A673 (cell line): ENCODE measurements at regions of chr1 and their contacts with region 1.

Region 1: DNA sequence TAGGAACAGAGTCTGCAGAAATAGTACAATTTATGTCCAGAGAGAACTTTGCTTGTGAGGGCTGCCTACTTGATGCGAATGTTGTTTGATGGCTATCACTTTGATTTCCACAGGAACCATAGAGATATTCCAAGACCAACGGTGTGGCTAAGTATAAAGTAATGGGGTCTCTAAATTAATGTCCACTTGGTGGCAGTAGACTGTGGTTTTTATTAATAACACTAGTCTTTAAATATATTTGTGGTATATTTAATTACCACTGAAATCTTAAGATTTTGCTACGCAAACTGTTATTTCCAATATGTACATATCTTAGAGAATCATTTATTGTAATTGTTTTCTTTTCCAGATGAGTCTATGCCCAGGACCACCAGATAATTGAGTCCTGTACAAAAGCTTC is 647.9 kb downstream of the PLA2G4A start:
- DNase-seq: peak; percentile 35
- H3K4me3 ChIP-seq: no peak overlapping the region
- H3K27ac ChIP-seq: no peak overlapping the region
- H3K4me1 ChIP-seq: peaks cover 3% of the 10 kb centered on the region
- H3K27me3 ChIP-seq: no peaks in the 10 kb centered on the region
- CTCF ChIP-seq: peak; percentile 64

Region 2: GRCh38 chr1:187313133-187313532 is 163.5 kb before region 1 on chr1:
- CTCF ChIA-PET with region 1: no interaction called
- POLR2A ChIA-PET with region 1: no interaction called
- intact Hi-C with region 1: no loop called
- DNase-seq: no peak
- H3K4me3 ChIP-seq: no peak overlapping the region
- H3K27ac ChIP-seq: no peak overlapping the region
- H3K4me1 ChIP-seq: no peaks in the 10 kb centered on the region
- H3K27me3 ChIP-seq: no peaks in the 10 kb centered on the region
- CTCF ChIP-seq: no peak

Region 3: DNA sequence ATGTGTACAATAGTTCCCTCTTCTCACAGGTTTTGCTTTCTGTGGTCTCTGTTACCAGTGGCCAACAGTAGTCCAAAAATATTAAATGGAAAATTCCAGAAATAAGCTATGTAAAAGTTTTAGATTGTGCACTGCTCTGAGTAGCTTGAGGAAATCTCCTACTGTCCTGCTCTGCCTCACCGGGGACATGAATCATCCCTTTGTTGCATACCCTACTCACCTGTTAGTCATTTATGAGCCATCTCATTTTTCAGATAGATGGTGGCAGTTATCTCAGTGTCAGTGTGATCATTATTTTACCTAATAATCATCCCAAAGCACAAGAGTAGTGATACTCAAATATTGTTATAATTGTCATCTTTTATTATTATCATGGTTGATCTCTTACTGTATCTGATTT is 40.2 kb after region 1 on chr1:
- CTCF ChIA-PET with region 1: no interaction called
- POLR2A ChIA-PET with region 1: interaction called, 10 read pairs
- intact Hi-C with region 1: no loop called
- DNase-seq: no peak
- H3K4me3 ChIP-seq: no peak overlapping the region
- H3K27ac ChIP-seq: no peak overlapping the region
- H3K4me1 ChIP-seq: peaks cover 6% of the 10 kb centered on the region
- H3K27me3 ChIP-seq: no peaks in the 10 kb centered on the region
- CTCF ChIP-seq: no peak

Region 4: GRCh38 chr1:188050250-188050649 is 573.6 kb after region 1 on chr1:
- CTCF ChIA-PET with region 1: no interaction called
- POLR2A ChIA-PET with region 1: no interaction called
- intact Hi-C with region 1: no loop called
- DNase-seq: no peak
- H3K4me3 ChIP-seq: no peak overlapping the region
- H3K27ac ChIP-seq: no peak overlapping the region
- H3K4me1 ChIP-seq: no peaks in the 10 kb centered on the region
- H3K27me3 ChIP-seq: no peaks in the 10 kb centered on the region
- CTCF ChIP-seq: no peak